ENCODE measurements at regions of chr5 and their contacts with region 1.

Region 1: GRCh38 chr5:159444441-159445082 is 114.3 kb upstream of the IL12B start:
- DNase-seq: peak; percentile 48
- ATAC-seq: peak; percentile 69
- H3K4me3 ChIP-seq: no peak overlapping the region
- H3K27ac ChIP-seq: no peak overlapping the region
- H3K4me1 ChIP-seq: no peaks in the 10 kb centered on the region
- H3K27me3 ChIP-seq: peaks cover 0 to 11% of the 10 kb centered on the region in 2 experiments; a peak in 1 of 5 replicates
- CTCF ChIP-seq: peak; percentile 71
- EP300 ChIP-seq: no peak
- POLR2A ChIP-seq: no peak
- RAD21 ChIP-seq: peak; percentile 40; the same call in 1 of the 2 replicates

Region 2: DNA sequence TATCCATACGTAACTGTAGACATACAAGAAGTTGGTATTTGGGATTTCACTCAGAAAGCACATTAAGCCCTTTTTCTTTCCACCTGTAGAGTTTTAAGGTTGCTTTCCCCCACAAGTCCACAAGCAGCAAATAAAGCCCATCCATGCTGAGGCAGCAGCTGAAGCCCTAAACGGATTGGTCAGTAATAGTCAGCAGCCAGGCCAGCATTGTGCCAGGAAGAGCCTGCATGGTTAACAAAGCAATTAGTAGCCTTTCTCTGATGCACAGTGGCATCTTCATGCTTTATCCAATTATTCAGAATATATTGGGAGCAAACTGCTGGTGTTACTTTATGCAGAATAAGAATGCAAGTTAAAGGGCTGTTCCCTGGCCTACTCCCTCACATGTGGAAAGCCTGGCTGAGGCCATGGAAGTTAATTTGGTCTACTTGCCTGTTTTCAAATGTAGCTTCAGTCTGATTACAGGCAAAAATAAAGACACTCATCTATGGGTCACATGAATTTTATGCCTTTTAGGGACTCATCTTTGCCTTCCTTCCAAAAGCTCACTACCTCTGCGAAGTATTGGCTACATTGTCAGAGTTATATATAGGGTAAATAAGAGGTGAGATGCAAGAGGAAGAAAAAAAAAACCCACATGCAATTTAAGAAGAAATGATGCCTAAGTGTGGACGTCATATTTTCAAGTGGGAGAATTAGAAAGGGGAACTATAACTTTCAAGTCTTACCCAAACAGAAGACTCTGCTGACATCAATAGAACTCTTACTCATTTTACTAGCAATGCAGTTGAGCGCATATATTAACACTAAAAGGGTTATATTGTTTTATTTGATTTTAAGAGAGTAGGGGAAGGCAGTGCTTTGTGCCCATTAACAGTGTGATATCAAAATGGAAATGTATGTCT is 360.8 kb before region 1 on chr5:
- CTCF ChIA-PET with region 1: no interaction called
- POLR2A ChIA-PET with region 1: no interaction called
- in situ Hi-C with region 1: no loop called
- intact Hi-C with region 1: no loop called
- DNase-seq: no peak
- ATAC-seq: no peak
- H3K4me3 ChIP-seq: no peak overlapping the region
- H3K27ac ChIP-seq: no peak overlapping the region
- H3K4me1 ChIP-seq: no peaks in the 10 kb centered on the region
- H3K27me3 ChIP-seq: peaks cover 0 to 5% of the 10 kb centered on the region in 2 experiments; a peak in 3 of 5 replicates
- CTCF ChIP-seq: no peak
- EP300 ChIP-seq: no peak
- POLR2A ChIP-seq: no peak
- RAD21 ChIP-seq: no peak

Region 3: GRCh38 chr5:159915904-159916840 is 471.6 kb after region 1 on chr5 and contains the start of gene ADRA1B:
- CTCF ChIA-PET with region 1: no interaction called
- POLR2A ChIA-PET with region 1: no interaction called
- in situ Hi-C with region 1: loop called (anchors 10 kb)
- intact Hi-C with region 1: loop called (anchors 1 kb)
- DNase-seq: peak; percentile 10
- ATAC-seq: peak; percentile 97
- H3K4me3 ChIP-seq: peak within 1 kb of the TSS in 2 of 3 experiments; percentile 26 to 31; a peak in 2 of 6 replicates
- H3K27ac ChIP-seq: no peak within 1 kb of the TSS
- H3K4me1 ChIP-seq: no peaks in the 10 kb centered on the region
- H3K27me3 ChIP-seq: peaks cover 2 to 44% of the 10 kb centered on the region in 2 experiments; a peak in 4 of 5 replicates
- CTCF ChIP-seq: peak; percentile 71
- EP300 ChIP-seq: no peak
- POLR2A ChIP-seq: no peak
- RAD21 ChIP-seq: peak; percentile 74
- total RNA-seq, gene ADRA1B: not detected in 2 replicates

Region 4: DNA sequence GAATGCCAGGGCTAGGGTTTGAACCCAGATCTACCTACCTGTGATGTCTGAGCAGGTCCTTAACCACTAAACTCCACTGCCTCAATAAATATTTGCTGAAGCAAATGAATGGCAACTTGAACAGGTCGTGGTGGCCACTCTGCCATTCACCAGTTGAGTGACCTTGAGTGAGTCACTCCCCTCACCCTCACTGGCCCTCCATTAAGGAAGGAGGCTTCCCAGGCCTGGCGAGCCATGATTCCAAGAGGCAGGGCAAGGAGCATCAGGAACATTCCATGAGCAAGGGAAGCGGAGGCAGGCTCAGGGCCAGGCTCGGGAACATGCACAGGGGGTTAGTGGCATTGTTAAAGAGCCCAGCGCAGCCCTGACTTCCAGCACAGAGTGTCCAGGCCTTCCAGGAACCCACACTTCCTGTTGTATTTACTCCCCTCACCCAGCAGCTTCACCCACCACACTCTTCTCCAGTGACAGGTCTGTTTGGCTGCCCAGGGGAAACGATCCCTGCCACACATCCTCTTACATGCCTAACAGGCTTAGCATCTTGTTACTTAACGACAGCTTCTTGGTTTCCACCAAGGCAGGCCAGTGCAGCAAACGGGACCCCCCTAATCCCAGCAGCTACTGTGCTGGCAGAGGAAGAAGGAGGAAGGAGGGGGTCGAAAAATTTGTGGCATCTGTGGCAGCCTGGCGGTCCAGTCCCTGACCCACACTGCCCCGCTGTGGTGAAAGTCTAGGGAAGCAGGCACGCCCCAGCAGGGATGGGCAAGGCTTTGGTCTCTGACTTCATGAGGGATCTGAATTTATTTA is 520.7 kb after region 1 on chr5:
- CTCF ChIA-PET with region 1: no interaction called
- POLR2A ChIA-PET with region 1: no interaction called
- in situ Hi-C with region 1: loop called (anchors 5 kb)
- intact Hi-C with region 1: loop called (anchors 1 kb)
- DNase-seq: peak; percentile 20
- ATAC-seq: peak; percentile 94
- H3K4me3 ChIP-seq: no peak overlapping the region
- H3K27ac ChIP-seq: no peak overlapping the region
- H3K4me1 ChIP-seq: no peaks in the 10 kb centered on the region
- H3K27me3 ChIP-seq: no peaks in the 10 kb centered on the region
- CTCF ChIP-seq: peak; percentile 61
- EP300 ChIP-seq: no peak
- POLR2A ChIP-seq: no peak
- RAD21 ChIP-seq: 0 out of 2 replicates have a peak, but pooled peaks have one; percentile 40